ENCODE measurements at regions of chr1 and their contacts with region 1.

Region 1: DNA sequence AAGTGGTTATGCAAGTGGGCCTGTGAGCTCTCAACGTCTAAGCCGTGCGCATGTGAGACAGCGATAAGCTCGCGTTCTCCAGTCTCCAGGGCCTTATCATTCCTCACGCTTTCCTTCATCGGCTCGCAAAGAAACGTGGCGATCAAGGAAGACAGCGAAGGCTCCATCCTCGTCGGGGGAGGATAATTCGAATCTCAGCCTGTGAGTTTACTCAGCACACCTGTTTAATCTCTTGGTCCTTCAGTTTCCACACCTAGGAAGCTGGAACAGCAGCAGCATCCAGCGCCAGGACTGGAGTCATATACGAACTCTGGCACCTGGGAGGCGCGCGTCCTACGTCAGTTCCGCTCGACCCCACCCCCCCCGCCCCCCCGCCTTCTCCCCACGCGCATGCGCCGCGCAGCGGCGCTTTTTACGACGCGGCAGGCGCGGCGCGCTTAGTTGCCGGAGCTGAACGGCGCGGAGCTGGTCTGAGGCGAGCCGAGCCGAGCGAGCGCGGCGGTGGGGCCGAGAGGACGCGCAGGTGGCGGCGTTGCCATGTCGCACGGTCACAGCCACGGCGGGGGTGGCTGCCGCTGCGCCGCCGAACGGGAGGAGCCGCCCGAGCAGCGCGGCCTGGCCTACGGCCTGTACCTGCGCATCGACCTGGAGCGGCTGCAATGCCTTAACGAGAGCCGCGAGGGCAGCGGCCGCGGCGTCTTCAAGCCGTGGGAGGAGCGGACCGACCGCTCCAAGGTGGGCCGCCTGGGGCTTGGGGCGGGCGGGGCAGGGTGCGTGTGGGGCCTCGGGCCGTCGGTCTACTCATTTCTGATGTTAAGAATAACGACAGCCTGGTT is at the start of gene PITHD1:
- DNase-seq: peak; percentile 80 to 87 (median 85)
- H3K4me3 ChIP-seq: peak within 1 kb of the TSS; percentile 88 to 97
- H3K4me3 Mint-ChIP-seq: peak within 1 kb of the TSS; percentile 90 to 96 (median 94)
- H3K27ac ChIP-seq: peak within 1 kb of the TSS; percentile 81
- H3K27ac Mint-ChIP-seq: peak within 1 kb of the TSS; percentile 89 to 99 (median 98)
- H3K4me1 ChIP-seq: peaks cover 26% of the 10 kb centered on the region
- H3K4me1 Mint-ChIP-seq: peaks cover 19 to 39% (median 27%) of the 10 kb centered on the region in 4 donors
- H3K27me3 ChIP-seq: no peaks in the 10 kb centered on the region
- H3K27me3 Mint-ChIP-seq: no peaks in the 10 kb centered on the region
- total RNA-seq, gene PITHD1: 78.3 to 82.1 TPM

Region 2: GRCh38 chr1:23428136-23428905 is 349.9 kb before region 1 on chr1:
- CTCF ChIA-PET with region 1: no interaction called
- POLR2A ChIA-PET with region 1: no interaction called
- intact Hi-C with region 1: no loop called
- DNase-seq: no peak
- H3K4me3 ChIP-seq: no peak overlapping the region
- H3K4me3 Mint-ChIP-seq: no peak overlapping the region
- H3K27ac ChIP-seq: no peak overlapping the region
- H3K27ac Mint-ChIP-seq: peak overlapping the region in 1 of 7 donors; percentile 4
- H3K4me1 ChIP-seq: peaks cover 12% of the 10 kb centered on the region
- H3K4me1 Mint-ChIP-seq: peaks cover 3 to 18% (median 10%) of the 10 kb centered on the region in 4 donors
- H3K27me3 ChIP-seq: no peaks in the 10 kb centered on the region
- H3K27me3 Mint-ChIP-seq: peaks cover 0 to 2% of the 10 kb centered on the region in 2 donors

Region 3: DNA sequence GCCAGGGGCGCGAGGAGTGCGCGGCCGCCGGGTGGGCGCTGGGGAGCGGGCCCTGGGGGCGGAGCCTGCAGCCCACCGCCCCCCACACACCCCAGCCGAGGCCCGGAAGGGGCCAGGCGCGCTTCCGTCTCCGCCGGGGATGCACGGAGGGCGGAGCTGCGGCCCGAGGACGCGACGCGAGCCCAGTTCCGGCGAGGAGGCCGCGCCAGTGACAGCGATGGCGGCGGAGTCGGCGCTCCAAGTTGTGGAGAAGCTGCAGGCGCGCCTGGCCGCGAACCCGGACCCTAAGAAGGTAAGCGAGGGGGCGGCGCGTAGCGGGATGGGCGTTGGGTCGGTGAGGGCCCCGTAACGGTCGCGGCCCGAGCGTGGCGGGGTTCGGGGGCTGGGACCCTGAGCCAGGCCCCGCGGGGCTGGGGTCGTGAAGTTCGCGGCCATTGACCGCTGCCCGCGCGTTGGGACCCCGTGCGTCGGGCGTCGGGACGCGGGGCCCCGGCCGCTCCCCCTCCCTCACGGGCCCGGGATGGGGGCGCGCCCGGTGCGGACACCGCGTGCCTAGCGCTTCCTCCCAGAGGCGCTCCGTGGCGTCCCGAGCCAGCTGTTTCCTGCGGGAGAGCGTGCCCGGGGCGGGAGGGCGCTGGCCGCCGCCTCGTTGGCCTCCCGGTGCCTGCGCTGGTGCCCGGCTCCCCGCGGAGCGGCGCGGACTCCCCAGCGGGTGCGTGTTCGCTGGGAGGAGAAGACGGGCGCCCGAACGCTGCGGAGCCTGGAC is 34.7 kb before region 1 on chr1 and contains the start of gene ELOA:
- CTCF ChIA-PET with region 1: interaction called, 4 read pairs
- POLR2A ChIA-PET with region 1: interaction called, 19 read pairs
- intact Hi-C with region 1: loop called (anchors 5 kb)
- DNase-seq: peak; percentile 74 to 78 (median 77)
- H3K4me3 ChIP-seq: peak within 1 kb of the TSS; percentile 75 to 89
- H3K4me3 Mint-ChIP-seq: peak within 1 kb of the TSS; percentile 91 to 97 (median 92)
- H3K27ac ChIP-seq: peak within 1 kb of the TSS; percentile 87
- H3K27ac Mint-ChIP-seq: peak within 1 kb of the TSS; percentile 92 to 95 (median 94)
- H3K4me1 ChIP-seq: peaks cover 50% of the 10 kb centered on the region
- H3K4me1 Mint-ChIP-seq: peaks cover 37 to 57% (median 46%) of the 10 kb centered on the region in 4 donors
- H3K27me3 ChIP-seq: no peaks in the 10 kb centered on the region
- H3K27me3 Mint-ChIP-seq: no peaks in the 10 kb centered on the region
- total RNA-seq, gene ELOA: 28.3 to 31.7 TPM

Region 4: DNA sequence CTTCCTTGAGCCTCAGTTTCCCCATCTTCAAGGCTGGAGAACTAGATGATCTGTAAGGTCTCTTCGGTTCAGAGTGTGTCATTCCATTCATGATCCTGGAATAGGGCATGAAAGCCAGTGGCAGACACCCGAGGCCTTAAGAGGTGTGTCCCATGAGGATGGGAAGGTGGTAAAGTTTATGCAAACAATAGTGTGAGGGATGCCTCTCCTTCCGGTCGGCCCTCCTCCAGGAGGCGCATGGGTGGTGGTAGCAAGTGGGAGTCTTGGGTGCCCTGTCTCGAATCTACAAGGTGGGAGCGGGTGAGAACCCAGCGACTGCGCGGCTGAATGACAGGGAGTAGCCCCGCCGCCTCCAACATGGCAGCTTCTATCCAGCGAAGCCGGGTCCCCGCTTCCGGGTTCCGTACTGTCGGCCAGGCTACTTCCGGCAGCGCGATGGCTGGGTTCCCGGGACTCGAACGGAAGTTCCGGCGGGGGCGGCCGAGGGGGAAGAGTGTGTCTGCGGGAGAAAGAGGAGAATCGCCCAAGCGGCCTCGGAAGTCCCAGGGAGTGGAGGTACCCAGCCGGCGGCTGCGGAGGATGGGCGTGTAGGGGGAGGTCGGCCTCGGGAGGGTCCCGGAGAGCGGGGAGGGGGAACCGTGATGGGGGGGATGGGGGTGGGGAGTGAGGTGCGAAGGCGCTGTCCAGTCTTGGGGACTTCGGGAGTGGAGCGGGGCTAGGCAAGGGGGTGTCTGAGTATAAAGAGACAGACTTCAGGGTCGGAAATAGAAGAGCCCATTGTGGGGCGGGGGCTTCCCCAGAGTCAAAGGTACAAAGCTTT is 12.7 kb after region 1 on chr1 and contains the start of gene LYPLA2:
- CTCF ChIA-PET with region 1: interaction called, 4 read pairs
- POLR2A ChIA-PET with region 1: interaction called, 64 read pairs
- intact Hi-C with region 1: loop called (anchors 1 kb)
- DNase-seq: peak; percentile 78 to 89 (median 78)
- H3K4me3 ChIP-seq: peak within 1 kb of the TSS; percentile 82 to 84
- H3K4me3 Mint-ChIP-seq: peak within 1 kb of the TSS; percentile 89 to 99 (median 98)
- H3K27ac ChIP-seq: peak within 1 kb of the TSS; percentile 70
- H3K27ac Mint-ChIP-seq: peak within 1 kb of the TSS; percentile 91 to 98 (median 97)
- H3K4me1 ChIP-seq: peaks cover 28% of the 10 kb centered on the region
- H3K4me1 Mint-ChIP-seq: peaks cover 10 to 40% (median 23%) of the 10 kb centered on the region in 4 donors
- H3K27me3 ChIP-seq: no peaks in the 10 kb centered on the region
- H3K27me3 Mint-ChIP-seq: no peaks in the 10 kb centered on the region
- total RNA-seq, gene LYPLA2: 52.6 to 55.8 TPM

Region 5: DNA sequence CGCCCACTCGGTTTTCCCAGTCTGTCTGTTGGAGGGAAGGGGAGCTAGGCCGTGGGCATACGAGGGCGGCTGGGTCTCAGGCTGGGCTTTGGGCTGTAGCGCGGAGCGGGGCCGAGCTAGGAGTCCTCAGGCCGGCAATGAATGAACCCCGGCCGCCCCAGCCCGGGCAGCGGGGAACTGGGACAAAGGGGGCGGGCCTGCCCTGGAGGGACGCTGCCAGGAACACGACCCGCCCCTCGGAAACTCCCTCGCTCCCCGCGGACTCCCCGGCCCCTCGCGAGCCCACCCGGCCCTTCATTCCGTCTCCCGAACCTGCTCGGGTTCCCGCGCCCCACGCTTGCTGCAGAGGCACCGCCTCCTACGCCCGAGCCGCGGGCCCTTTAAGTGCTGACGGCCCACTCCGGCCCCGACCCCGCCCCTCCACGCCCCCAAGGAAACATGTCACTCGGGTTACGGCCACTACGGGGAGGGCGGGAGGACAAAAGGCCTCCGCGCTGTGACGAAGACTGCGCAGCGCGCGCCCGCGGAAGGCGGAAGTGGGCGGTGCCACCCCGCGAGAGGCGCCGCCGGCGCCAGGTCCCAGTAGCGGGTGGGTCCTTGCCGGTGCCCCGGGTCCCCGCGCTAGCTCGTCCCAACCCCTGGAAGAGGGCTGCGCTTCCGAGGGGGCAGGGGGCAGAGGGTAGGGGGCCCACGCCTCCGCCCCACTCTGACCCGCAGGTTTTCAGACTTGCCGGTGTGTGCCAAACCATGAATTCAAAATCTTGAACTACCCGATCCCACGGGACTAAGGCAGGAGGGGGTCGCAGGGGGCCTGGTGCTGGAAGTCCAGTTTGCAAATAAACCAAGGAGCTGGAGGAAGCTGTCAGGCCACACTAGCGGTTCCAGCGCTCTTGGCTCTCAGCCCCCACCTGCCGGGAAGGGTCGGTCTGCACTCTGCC is 22.5 kb after region 1 on chr1 and contains the start of gene GALE:
- CTCF ChIA-PET with region 1: interaction called, 3 read pairs
- POLR2A ChIA-PET with region 1: interaction called, 70 read pairs
- intact Hi-C with region 1: loop called (anchors 1 kb)
- DNase-seq: peak; percentile 94 to 97 (median 94)
- H3K4me3 ChIP-seq: peak within 1 kb of the TSS; percentile 70 to 88
- H3K4me3 Mint-ChIP-seq: peak within 1 kb of the TSS; percentile 80 to 98 (median 92)
- H3K27ac ChIP-seq: peak within 1 kb of the TSS; percentile 92
- H3K27ac Mint-ChIP-seq: peak within 1 kb of the TSS; percentile 84 to 97 (median 94)
- H3K4me1 ChIP-seq: peaks cover 23% of the 10 kb centered on the region
- H3K4me1 Mint-ChIP-seq: peaks cover 8 to 37% (median 21%) of the 10 kb centered on the region in 4 donors
- H3K27me3 ChIP-seq: no peaks in the 10 kb centered on the region
- H3K27me3 Mint-ChIP-seq: no peaks in the 10 kb centered on the region
- total RNA-seq, gene GALE: 11.2 to 12.0 TPM

Region 6: GRCh38 chr1:23809751-23810171 is 31.6 kb after region 1 on chr1:
- CTCF ChIA-PET with region 1: interaction called, 11 read pairs
- POLR2A ChIA-PET with region 1: interaction called, 3 read pairs
- intact Hi-C with region 1: no loop called
- DNase-seq: peak; percentile 79 to 84 (median 81)
- H3K4me3 ChIP-seq: no peak overlapping the region
- H3K4me3 Mint-ChIP-seq: no peak overlapping the region
- H3K27ac ChIP-seq: no peak overlapping the region
- H3K27ac Mint-ChIP-seq: peak overlapping the region in 5 of 7 donors; percentile 12 to 80 (median 43)
- H3K4me1 ChIP-seq: peaks cover 9% of the 10 kb centered on the region
- H3K4me1 Mint-ChIP-seq: peaks cover 7 to 20% (median 15%) of the 10 kb centered on the region in 4 donors
- H3K27me3 ChIP-seq: no peaks in the 10 kb centered on the region
- H3K27me3 Mint-ChIP-seq: no peaks in the 10 kb centered on the region

Region 7: GRCh38 chr1:23825076-23825761 is 47.0 kb after region 1 on chr1 and contains the start of gene HMGCL:
- CTCF ChIA-PET with region 1: no interaction called
- POLR2A ChIA-PET with region 1: interaction called, 13 read pairs
- intact Hi-C with region 1: no loop called
- DNase-seq: peak; percentile 80 to 89 (median 82)
- H3K4me3 ChIP-seq: peak within 1 kb of the TSS; percentile 48 to 98
- H3K4me3 Mint-ChIP-seq: peak within 1 kb of the TSS; percentile 92 to 97 (median 94)
- H3K27ac ChIP-seq: peak within 1 kb of the TSS; percentile 80
- H3K27ac Mint-ChIP-seq: peak within 1 kb of the TSS; percentile 86 to 98 (median 96)
- H3K4me1 ChIP-seq: peaks cover 18% of the 10 kb centered on the region
- H3K4me1 Mint-ChIP-seq: peaks cover 15 to 28% (median 20%) of the 10 kb centered on the region in 4 donors
- H3K27me3 ChIP-seq: no peaks in the 10 kb centered on the region
- H3K27me3 Mint-ChIP-seq: no peaks in the 10 kb centered on the region
- total RNA-seq, gene HMGCL: 36.3 to 38.5 TPM

Region 8: DNA sequence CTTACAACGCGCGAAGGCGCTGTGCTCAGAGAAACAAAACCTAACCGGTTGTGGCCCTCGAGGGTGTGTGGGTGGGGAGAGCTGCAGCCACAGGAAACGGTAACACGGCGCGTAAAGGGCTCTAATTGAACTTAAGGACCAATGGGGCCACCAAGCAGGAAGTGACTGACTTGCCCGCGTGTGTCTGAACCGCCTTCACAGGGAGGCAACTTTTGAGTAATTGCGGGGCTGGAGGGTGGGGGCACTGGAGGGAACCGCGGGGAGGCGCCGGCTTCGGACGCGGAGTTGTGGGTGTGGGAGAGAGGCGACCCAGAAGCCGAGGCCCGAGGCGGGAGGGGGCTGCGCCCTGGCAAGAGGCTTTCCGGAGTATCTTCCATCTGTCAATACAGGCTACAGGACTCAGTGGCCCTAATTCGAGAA is 180.9 kb after region 1 on chr1:
- CTCF ChIA-PET with region 1: no interaction called
- POLR2A ChIA-PET with region 1: interaction called, 4 read pairs
- intact Hi-C with region 1: loop called (anchors 1 kb)
- DNase-seq: peak; percentile 90 to 97 (median 94)
- H3K4me3 ChIP-seq: peak overlapping the region; percentile 66 to 99
- H3K4me3 Mint-ChIP-seq: peak overlapping the region; percentile 99 to 100 (median 100)
- H3K27ac ChIP-seq: peak overlapping the region; percentile 95
- H3K27ac Mint-ChIP-seq: peak overlapping the region; percentile 98 to 100 (median 100)
- H3K4me1 ChIP-seq: peaks cover 41% of the 10 kb centered on the region
- H3K4me1 Mint-ChIP-seq: peaks cover 26 to 70% (median 49%) of the 10 kb centered on the region in 4 donors
- H3K27me3 ChIP-seq: no peaks in the 10 kb centered on the region
- H3K27me3 Mint-ChIP-seq: no peaks in the 10 kb centered on the region

Measured in CD4-positive, alpha-beta memory T cell (primary cell).